Transverse colon (tissue), 4 donors: ENCODE measurements at regions of chr11 and their contacts with region 1.

Region 1: GRCh38 chr11:69642913-69643632 is 2.1 kb downstream of the CCND1 start:
- DNase-seq: peak; percentile 86
- H3K4me3 ChIP-seq: peak overlapping the region; percentile 71 to 93 (median 78)
- H3K27ac ChIP-seq: peak overlapping the region; percentile 82 to 89 (median 86)
- H3K4me1 ChIP-seq: peaks cover 21 to 60% (median 54%) of the 10 kb centered on the region in 4 donors
- H3K27me3 ChIP-seq: peaks cover 41% of the 10 kb centered on the region
- CTCF ChIP-seq: peak; percentile 79 to 96 (median 90)
- EP300 ChIP-seq: no peak
- POLR2A ChIP-seq: peak; percentile 19

Region 2: GRCh38 chr11:69292221-69292648 is 350.8 kb before region 1 on chr11:
- in situ Hi-C with region 1: loop called in 1 of 4 experiments (anchors 5 kb)
- intact Hi-C with region 1: no loop called
- DNase-seq: peak; percentile 50
- H3K4me3 ChIP-seq: no peak overlapping the region
- H3K27ac ChIP-seq: no peak overlapping the region
- H3K4me1 ChIP-seq: peaks cover 36 to 65% (median 50%) of the 10 kb centered on the region in 4 donors
- H3K27me3 ChIP-seq: no peaks in the 10 kb centered on the region
- CTCF ChIP-seq: peak; percentile 62 to 69 (median 66)
- EP300 ChIP-seq: no peak
- POLR2A ChIP-seq: no peak

Region 3: GRCh38 chr11:69443138-69443967 is 199.7 kb before region 1 on chr11:
- in situ Hi-C with region 1: loop called in 1 of 4 experiments (anchors 25 kb)
- intact Hi-C with region 1: no loop called
- DNase-seq: peak; percentile 89
- H3K4me3 ChIP-seq: peak overlapping the region in 3 of 4 donors; percentile 5 to 44 (median 34)
- H3K27ac ChIP-seq: peak overlapping the region; percentile 71 to 81 (median 74)
- H3K4me1 ChIP-seq: peaks cover 17 to 26% (median 21%) of the 10 kb centered on the region in 4 donors
- H3K27me3 ChIP-seq: no peaks in the 10 kb centered on the region
- CTCF ChIP-seq: no peak
- EP300 ChIP-seq: no peak
- POLR2A ChIP-seq: no peak